Activated T-helper 1 cell treated with anti-CD3 and anti-CD28 coated beads, Interleukin-12 subunit alpha, Interleukin-12 subunit beta, Interleukin-2, Interleukin-4 antibody, amounts not matched to agents 30 ng/mL and 10 ng/mL and 1 ng/mL, durations not matched to agents 14 hours and 24 hours and 36 hours (primary cell): ENCODE measurements at regions of chr15 and their contacts with region 1.

Region 1: GRCh38 chr15:57861036-57861638 is 154.6 kb downstream of the POLR2M start:
- DNase-seq: peak; percentile 17
- H3K4me3 Mint-ChIP-seq: no peak overlapping the region
- H3K27ac Mint-ChIP-seq: no peak overlapping the region
- H3K4me1 Mint-ChIP-seq: peaks cover 26% of the 10 kb centered on the region
- H3K27me3 Mint-ChIP-seq: peaks cover 18% of the 10 kb centered on the region

Region 2: GRCh38 chr15:57640935-57641682 is 220.0 kb before region 1 on chr15:
- intact Hi-C with region 1: loop called (anchors 2 kb)
- DNase-seq: no peak
- H3K4me3 Mint-ChIP-seq: no peak overlapping the region
- H3K27ac Mint-ChIP-seq: no peak overlapping the region
- H3K4me1 Mint-ChIP-seq: no peaks in the 10 kb centered on the region
- H3K27me3 Mint-ChIP-seq: peaks cover 15% of the 10 kb centered on the region

Region 3: DNA sequence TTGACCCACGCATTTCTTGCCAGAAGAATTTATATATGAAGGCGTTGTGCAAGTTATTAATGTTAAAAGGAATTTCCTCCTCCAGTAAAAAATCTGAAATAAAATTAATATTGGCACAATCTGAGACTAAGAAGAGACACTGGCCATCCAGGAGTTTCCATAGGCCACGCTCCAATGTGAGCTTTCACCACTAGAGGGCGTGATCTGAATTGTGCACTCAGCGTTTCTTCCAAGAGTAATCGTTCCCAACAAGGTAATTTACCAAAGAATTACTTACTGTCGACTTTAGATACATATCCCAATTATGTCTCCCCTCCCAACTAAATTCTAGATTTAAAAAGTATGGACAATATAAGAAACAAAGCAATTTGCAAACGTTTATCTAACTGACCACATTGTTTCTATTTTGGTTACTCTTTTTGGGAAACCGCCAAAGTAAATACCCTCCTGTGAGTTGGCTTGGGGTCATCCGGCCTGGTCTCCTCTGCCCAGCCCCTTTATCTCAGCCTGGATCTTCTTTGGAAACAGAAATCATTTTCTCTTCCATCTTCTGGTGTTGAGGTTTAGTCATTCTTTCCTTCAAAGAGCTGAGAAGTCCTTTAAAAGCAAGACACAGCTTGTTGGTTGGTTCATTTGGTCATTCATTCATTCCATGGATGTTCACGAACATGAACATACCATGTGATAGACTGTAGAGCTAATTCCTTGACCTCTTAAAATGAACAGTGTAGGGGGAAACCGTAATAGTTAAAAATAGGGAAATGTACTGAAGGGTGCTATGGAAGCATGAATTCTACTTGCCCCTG is 128.4 kb before region 1 on chr15:
- intact Hi-C with region 1: loop called (anchors 1 kb)
- DNase-seq: peak; percentile 26
- H3K4me3 Mint-ChIP-seq: no peak overlapping the region
- H3K27ac Mint-ChIP-seq: no peak overlapping the region
- H3K4me1 Mint-ChIP-seq: peaks cover 10% of the 10 kb centered on the region
- H3K27me3 Mint-ChIP-seq: peaks cover 8% of the 10 kb centered on the region

Region 4: DNA sequence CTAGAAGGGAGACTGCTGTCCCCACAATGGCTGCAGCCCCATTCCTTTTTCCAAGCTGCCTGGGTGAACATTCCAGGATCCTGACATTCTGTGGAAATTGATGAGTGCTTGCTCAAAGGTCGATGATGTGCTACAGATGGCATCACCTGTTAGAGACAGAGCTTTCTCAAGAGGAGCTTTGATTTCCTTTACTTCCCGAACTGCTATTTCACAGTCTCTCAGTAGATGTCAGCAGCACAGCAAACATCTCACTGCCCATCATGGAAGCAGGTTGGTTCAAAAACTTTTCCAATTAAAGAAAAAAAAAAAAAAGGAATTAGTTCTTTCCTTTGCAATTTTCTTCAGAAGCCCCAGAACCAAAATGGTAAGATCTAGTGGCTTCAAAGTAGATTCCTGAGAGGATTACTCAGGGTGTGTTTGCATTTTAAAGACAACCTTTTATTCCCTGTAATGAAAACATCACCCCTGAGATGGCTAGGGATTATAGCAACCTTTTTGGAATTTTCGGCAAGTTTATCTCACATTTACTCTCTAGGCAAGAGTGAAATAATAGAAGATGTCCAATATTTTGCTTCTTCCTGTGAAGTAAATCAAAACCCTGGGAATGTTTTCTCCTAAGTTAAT is 109.8 kb before region 1 on chr15:
- intact Hi-C with region 1: loop called (anchors 1 kb)
- DNase-seq: no peak
- H3K4me3 Mint-ChIP-seq: no peak overlapping the region
- H3K27ac Mint-ChIP-seq: no peak overlapping the region
- H3K4me1 Mint-ChIP-seq: peaks cover 7% of the 10 kb centered on the region
- H3K27me3 Mint-ChIP-seq: peaks cover 6% of the 10 kb centered on the region